ENCODE measurements at regions of chr11 and their contacts with region 1.

Region 1: DNA sequence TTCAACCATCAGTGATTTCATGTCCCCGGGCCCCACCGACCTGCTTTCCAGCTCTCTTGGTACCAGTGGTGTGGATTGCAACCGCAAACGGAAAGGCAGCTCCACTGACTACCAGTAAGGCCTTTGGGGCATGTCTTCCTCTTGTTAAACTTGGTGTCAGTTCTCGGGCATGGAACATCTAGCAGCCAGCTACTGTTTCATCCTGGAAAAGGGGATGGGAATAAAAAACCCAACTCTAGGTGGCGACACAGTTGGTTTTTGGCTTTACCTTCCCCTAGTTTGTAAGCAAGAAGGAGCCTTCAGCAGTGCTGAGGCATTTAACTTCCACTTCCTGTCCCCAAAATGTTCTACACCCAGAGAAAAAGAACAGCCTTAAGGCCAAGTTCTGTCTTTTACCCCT is 76.7 kb downstream of the BMAL1 start:
- DNase-seq: peak in 1 of 2 experiments; percentile 30
- H3K4me3 ChIP-seq: no peak overlapping the region
- H3K4me3 Mint-ChIP-seq: no peak overlapping the region
- H3K27ac Mint-ChIP-seq: no peak overlapping the region
- H3K4me1 ChIP-seq: no peaks in the 10 kb centered on the region
- H3K4me1 Mint-ChIP-seq: no peaks in the 10 kb centered on the region
- H3K27me3 ChIP-seq: no peaks in the 10 kb centered on the region
- H3K27me3 Mint-ChIP-seq: no peaks in the 10 kb centered on the region
- CTCF ChIP-seq: peak; percentile 29 to 30

Region 2: GRCh38 chr11:13249996-13250395 is 104.3 kb before region 1 on chr11:
- CTCF ChIA-PET with region 1: no interaction called
- POLR2A ChIA-PET with region 1: no interaction called
- intact Hi-C with region 1: no loop called
- DNase-seq: peak in 1 of 2 experiments; percentile 17
- H3K4me3 ChIP-seq: no peak overlapping the region
- H3K4me3 Mint-ChIP-seq: no peak overlapping the region
- H3K27ac Mint-ChIP-seq: no peak overlapping the region
- H3K4me1 ChIP-seq: no peaks in the 10 kb centered on the region
- H3K4me1 Mint-ChIP-seq: no peaks in the 10 kb centered on the region
- H3K27me3 ChIP-seq: no peaks in the 10 kb centered on the region
- H3K27me3 Mint-ChIP-seq: peaks cover 9% of the 10 kb centered on the region
- CTCF ChIP-seq: no peak

Region 3: GRCh38 chr11:13343931-13344717 is 10.2 kb before region 1 on chr11:
- CTCF ChIA-PET with region 1: interaction called, 15 read pairs
- POLR2A ChIA-PET with region 1: no interaction called
- intact Hi-C with region 1: no loop called
- DNase-seq: peak; percentile 76 to 80
- H3K4me3 ChIP-seq: no peak overlapping the region
- H3K4me3 Mint-ChIP-seq: no peak overlapping the region
- H3K27ac Mint-ChIP-seq: no peak overlapping the region
- H3K4me1 ChIP-seq: no peaks in the 10 kb centered on the region
- H3K4me1 Mint-ChIP-seq: peaks cover 12% of the 10 kb centered on the region
- H3K27me3 ChIP-seq: no peaks in the 10 kb centered on the region
- H3K27me3 Mint-ChIP-seq: no peaks in the 10 kb centered on the region
- CTCF ChIP-seq: peak; percentile 81 to 82

Region 4: DNA sequence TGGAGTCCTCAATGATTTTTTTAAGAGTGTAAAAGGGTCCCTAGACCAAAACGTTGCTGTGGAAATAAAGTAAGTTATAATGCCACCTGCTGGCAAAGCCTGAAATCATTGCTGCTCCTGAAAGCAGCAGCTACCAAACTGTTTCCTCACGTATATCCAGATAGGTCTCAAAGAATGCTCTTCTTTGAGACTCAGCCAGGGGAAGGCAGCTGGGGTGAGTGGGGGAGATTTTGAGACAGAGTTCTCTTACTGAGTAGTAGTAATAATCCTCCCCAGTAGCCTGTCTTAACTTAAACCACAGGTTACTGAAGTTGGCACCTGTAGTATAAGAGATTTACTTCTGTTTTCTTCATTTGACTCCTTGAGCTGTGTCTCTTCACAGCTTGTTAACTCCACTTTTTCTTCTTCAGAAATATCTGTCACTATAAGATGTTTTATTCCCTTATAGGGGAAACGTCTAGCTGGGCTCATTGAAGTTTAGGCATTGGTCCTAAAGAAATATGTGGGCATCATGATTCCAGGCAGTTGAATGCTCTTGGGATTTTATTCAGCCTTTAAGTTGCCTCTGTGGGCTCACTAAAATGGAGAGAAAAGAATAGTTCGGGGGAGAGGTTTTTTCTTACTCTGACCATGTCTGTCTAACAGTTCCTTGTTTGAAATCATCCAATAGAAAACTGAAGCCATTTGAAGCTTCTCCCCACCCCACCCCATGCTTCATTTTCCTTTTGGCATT is 30.7 kb after region 1 on chr11:
- CTCF ChIA-PET with region 1: interaction called, 20 read pairs
- POLR2A ChIA-PET with region 1: no interaction called
- intact Hi-C with region 1: loop called (anchors 1 kb)
- DNase-seq: peak in 1 of 2 experiments; percentile 53
- H3K4me3 ChIP-seq: no peak overlapping the region
- H3K4me3 Mint-ChIP-seq: no peak overlapping the region
- H3K27ac Mint-ChIP-seq: no peak overlapping the region
- H3K4me1 ChIP-seq: no peaks in the 10 kb centered on the region
- H3K4me1 Mint-ChIP-seq: no peaks in the 10 kb centered on the region
- H3K27me3 ChIP-seq: no peaks in the 10 kb centered on the region
- H3K27me3 Mint-ChIP-seq: no peaks in the 10 kb centered on the region
- CTCF ChIP-seq: peak; percentile 70 to 72

Measured in Caco-2 (cell line).